ENCODE measurements at regions of chr17 and their contacts with region 1.

Region 1: DNA sequence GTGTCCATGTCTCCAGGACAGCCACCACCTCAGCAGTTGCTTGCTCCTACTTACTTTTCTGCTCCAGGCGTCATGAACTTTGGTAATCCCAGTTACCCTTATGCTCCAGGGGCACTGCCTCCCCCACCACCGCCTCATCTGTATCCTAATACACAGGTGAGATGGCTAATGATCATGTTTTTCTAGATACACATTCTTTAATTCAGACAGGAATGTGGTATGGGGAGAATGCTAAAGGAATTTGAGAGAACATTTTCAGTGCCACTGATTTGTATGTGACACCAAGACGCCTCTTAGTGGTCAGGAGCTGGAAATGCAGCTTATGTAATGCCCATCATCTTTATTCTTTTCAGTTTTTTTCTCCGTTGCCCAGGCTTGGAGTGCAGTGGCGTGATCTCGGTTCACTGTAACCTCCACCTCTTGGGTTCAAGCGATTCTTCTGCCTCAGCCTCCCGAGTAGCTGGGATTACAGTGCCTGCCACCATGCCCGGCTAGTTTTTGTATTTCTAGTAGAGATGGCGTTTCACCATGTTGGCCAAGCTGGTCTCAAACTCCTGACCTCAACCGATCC is 8.9 kb upstream of the RAPGEFL1 start:
- DNase-seq: no peak
- ATAC-seq: peak; percentile 70

Region 2: DNA sequence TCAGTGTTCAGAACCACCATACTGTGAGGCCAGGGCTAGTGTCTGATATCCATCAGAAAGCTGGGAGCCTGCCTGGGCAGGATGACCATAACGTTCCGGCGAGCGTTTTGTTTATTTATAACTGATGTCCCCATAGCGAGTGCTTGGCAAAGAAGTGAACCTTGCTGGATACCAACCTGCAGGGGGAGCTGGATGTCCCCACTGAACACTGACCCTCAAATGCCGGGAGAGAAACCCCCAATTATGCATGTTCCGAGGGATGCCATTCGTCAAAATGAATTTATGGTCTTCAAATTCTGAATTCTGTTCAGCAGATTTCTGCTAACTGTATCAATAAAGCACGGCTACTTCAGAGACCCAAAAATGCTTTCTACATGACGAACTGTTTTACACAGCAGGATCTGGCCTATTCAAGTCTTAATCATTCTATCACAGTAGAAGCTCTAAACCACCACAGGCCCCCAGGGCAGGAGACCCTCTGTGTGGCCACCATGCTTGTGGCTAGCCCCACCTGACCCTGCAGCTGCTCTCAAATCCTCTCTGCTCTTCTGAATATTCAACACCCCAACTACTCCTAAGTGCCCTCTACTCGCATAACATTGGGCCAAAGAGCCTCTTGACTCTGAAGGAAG is 129.3 kb before region 1 on chr17:
- intact Hi-C with region 1: loop called (anchors 10 kb)
- DNase-seq: peak; percentile 78
- ATAC-seq: peak; percentile 96

Region 3: DNA sequence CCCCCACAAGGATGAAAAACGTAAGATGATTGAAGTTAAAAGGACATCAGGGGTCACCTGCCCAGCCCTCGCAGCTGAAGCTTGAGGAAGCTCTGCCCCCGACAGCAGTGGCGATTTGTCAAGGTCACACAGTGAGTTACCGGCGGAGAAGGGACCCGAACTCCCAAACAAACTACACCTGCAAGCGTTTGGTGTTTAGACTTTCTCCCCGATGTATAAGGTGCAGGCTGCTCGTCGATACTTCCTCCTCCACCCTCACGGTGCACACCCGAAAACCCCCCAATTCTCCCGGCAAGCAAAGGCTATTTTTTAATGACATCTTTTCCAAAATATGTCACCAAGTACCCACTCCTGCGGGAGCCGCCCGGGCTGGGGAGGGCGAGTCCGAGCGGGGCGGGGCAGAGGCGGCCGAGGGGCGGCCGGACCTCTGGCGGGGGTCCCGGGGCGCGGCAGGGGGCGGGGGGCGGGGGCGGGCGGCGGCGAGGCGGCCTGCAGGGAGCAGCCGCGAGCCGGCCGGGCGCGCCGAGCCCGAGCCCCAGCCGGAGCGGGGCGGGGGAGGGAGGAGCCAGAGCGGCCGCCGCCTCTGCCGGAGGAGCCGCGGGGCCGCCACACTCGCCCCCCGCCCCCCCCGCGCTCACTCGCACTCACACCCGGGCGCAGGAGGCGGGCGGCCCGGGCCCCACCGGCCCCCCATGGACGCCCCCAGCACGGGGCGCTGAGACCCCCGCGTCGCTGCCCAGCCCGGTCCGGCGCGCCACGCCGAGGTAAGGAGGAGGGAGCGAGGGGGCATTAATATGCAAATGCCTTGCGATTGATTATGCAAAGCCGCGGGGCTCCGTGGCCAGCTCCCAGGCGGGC is 105.8 kb before region 1 on chr17 and contains the start of gene THRA:
- intact Hi-C with region 1: no loop called
- DNase-seq: peak; percentile 91
- ATAC-seq: peak; percentile 79
- total RNA-seq, gene THRA: 98.1 TPM

Measured in left ventricle myocardium superior (tissue), 1 donor.